Activated naive CD4-positive, alpha-beta T cell treated with anti-CD3 and anti-CD28 coated beads for 36 hours (primary cell): ENCODE measurements at regions of chr16 and their contacts with region 1.

Region 1: GRCh38 chr16:88442727-88443576 is 10.1 kb upstream of the ZFPM1 start:
- DNase-seq: peak; percentile 83
- H3K4me3 Mint-ChIP-seq: no peak overlapping the region
- H3K27ac Mint-ChIP-seq: no peak overlapping the region
- H3K4me1 Mint-ChIP-seq: no peaks in the 10 kb centered on the region
- H3K27me3 Mint-ChIP-seq: no peaks in the 10 kb centered on the region

Region 2: DNA sequence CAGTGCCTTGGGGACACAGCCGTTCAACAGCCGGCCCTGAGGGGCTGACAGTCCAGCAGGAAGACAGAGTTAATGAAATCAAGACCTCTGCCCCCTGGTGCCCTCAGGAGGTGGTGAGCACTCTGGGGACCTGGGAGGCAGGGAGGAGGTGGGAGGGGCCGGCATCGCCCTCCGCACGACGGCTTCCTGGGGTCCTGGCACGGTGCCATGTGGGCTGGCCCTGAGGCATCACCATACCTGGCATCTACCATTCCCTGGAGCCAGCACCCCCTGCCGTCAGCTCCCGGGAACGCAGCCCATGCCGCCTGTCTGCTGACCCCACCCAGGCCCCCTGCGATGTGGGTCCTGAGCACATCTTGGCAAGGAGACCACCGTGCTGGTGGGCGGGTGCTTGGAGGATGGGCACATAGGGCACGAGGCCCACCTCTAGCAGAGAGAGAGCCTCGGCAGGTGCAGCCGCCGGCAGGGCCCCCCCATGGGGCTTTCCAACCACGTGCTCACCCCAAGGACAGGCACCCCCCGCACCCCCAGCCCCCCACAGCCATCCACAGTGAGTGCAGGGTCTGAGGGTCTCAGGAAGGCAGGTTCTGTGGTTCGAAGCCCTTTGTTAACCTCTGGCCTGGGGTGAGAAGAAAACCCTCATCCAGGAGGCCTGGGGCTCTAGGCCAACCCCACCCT is 62.6 kb after region 1 on chr16:
- CTCF ChIA-PET with region 1: no interaction called
- intact Hi-C with region 1: loop called (anchors 1 kb)
- DNase-seq: peak; percentile 76
- H3K4me3 Mint-ChIP-seq: no peak overlapping the region
- H3K27ac Mint-ChIP-seq: no peak overlapping the region
- H3K4me1 Mint-ChIP-seq: peaks cover 4% of the 10 kb centered on the region
- H3K27me3 Mint-ChIP-seq: no peaks in the 10 kb centered on the region

Region 3: DNA sequence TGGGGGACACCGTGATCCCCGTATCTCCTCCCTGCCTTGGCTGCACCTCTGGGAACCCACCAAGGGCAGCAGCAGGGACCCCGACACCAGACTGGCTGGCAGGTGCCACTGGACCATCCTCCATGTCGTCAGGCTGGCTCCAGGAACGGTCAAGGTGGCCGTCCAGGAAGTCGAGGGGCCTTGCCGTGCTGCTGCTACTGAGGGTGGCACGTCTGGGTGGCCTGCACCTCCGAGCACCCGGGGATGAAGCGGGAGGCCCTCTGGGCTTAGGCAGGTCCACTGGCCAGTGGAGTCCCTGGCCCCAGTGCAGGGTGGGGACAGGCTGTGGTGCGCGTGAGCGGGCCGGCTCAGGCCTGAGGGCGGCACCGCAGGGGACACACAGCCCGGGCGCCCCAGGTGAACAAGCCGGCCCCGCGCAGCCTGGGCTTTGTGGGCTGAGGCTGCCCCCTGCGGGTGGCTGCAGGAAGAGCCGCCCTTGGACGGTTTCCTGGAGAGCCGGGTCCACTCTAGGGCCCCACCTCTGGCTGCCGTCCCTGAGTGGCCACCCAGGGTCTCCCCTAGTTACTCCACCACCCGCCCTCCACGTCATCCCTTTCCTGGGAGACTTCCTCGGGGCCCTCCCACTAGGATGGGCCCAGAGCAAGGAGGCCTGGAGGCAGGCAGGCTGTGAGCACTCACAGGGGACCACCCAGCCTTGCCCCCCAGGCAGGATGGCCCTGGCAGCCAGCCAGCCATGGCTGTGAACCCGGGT is 84.4 kb after region 1 on chr16:
- CTCF ChIA-PET with region 1: no interaction called
- intact Hi-C with region 1: loop called (anchors 1 kb)
- DNase-seq: peak; percentile 66
- H3K4me3 Mint-ChIP-seq: no peak overlapping the region
- H3K27ac Mint-ChIP-seq: no peak overlapping the region
- H3K4me1 Mint-ChIP-seq: peaks cover 1% of the 10 kb centered on the region
- H3K27me3 Mint-ChIP-seq: no peaks in the 10 kb centered on the region

Region 4: GRCh38 chr16:88561485-88562369 is 118.8 kb after region 1 on chr16:
- CTCF ChIA-PET with region 1: interaction called, 5 read pairs
- intact Hi-C with region 1: loop called (anchors 1 kb)
- DNase-seq: peak; percentile 56
- H3K4me3 Mint-ChIP-seq: no peak overlapping the region
- H3K27ac Mint-ChIP-seq: no peak overlapping the region
- H3K4me1 Mint-ChIP-seq: peaks cover 12% of the 10 kb centered on the region
- H3K27me3 Mint-ChIP-seq: no peaks in the 10 kb centered on the region